ENCODE measurements at regions of chr4 and their contacts with region 1.

Region 1: GRCh38 chr4:56301181-56302076 is 85.9 kb downstream of the AASDH start:
- DNase-seq: peak; percentile 68 to 88
- H3K4me3 ChIP-seq: no peak overlapping the region
- H3K4me1 ChIP-seq: peaks cover 7% of the 10 kb centered on the region
- H3K27me3 ChIP-seq: no peaks in the 10 kb centered on the region

Region 2: GRCh38 chr4:55948726-55949474 is 352.5 kb before region 1 on chr4 and contains the start of gene CEP135:
- in situ Hi-C with region 1: loop called (anchors 10 kb)
- DNase-seq: peak; percentile 88 to 96
- H3K4me3 ChIP-seq: peak within 1 kb of the TSS; percentile 78
- H3K4me1 ChIP-seq: peaks cover 30% of the 10 kb centered on the region
- H3K27me3 ChIP-seq: no peaks in the 10 kb centered on the region

Region 3: GRCh38 chr4:56386091-56386490 is 84.7 kb after region 1 on chr4:
- in situ Hi-C with region 1: no loop called
- DNase-seq: no peak
- H3K4me3 ChIP-seq: peak overlapping the region; percentile 62
- H3K4me1 ChIP-seq: peaks cover 3% of the 10 kb centered on the region
- H3K27me3 ChIP-seq: no peaks in the 10 kb centered on the region